Activated T-helper 1 cell treated with anti-CD3 and anti-CD28 coated beads, Interleukin-12 subunit alpha, Interleukin-12 subunit beta, Interleukin-2, Interleukin-4 antibody, amounts not matched to agents 30 ng/mL and 10 ng/mL and 1 ng/mL, durations not matched to agents 14 hours and 24 hours and 36 hours (primary cell): ENCODE measurements at regions of chr12 and their contacts with region 1.

Region 1: DNA sequence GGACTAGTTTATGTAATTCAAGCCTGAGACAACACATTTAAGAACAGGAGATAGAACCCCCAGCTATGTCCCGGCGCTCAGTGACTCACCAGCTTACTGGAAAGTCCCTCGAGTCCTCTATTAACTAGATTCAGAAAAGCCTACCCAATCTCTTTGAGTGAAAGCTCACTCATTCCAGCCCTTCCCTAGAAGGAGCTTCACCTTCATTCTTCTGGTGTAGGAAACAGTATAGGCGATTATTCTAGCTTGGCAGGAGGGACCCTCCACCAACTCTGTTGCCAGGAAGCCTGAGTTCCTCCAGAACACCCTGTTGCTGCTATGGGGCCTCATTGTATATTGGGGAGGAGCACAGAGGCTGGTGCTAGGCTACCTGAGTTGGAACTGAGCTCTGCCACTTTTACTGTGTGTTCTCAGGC is 57.2 kb upstream of the AEBP2 start:
- DNase-seq: peak; percentile 22
- H3K4me3 Mint-ChIP-seq: no peak overlapping the region
- H3K27ac Mint-ChIP-seq: peak overlapping the region; percentile 7
- H3K4me1 Mint-ChIP-seq: peaks cover 9% of the 10 kb centered on the region
- H3K27me3 Mint-ChIP-seq: no peaks in the 10 kb centered on the region

Region 2: GRCh38 chr12:18578191-18578590 is 803.9 kb before region 1 on chr12:
- intact Hi-C with region 1: no loop called
- DNase-seq: no peak
- H3K4me3 Mint-ChIP-seq: no peak overlapping the region
- H3K27ac Mint-ChIP-seq: no peak overlapping the region
- H3K4me1 Mint-ChIP-seq: no peaks in the 10 kb centered on the region
- H3K27me3 Mint-ChIP-seq: no peaks in the 10 kb centered on the region

Region 3: GRCh38 chr12:19482551-19483109 is 100.5 kb after region 1 on chr12:
- intact Hi-C with region 1: no loop called
- DNase-seq: peak; percentile 26
- H3K4me3 Mint-ChIP-seq: peak overlapping the region; percentile 8
- H3K27ac Mint-ChIP-seq: peak overlapping the region; percentile 81
- H3K4me1 Mint-ChIP-seq: peaks cover 55% of the 10 kb centered on the region
- H3K27me3 Mint-ChIP-seq: no peaks in the 10 kb centered on the region

Region 4: DNA sequence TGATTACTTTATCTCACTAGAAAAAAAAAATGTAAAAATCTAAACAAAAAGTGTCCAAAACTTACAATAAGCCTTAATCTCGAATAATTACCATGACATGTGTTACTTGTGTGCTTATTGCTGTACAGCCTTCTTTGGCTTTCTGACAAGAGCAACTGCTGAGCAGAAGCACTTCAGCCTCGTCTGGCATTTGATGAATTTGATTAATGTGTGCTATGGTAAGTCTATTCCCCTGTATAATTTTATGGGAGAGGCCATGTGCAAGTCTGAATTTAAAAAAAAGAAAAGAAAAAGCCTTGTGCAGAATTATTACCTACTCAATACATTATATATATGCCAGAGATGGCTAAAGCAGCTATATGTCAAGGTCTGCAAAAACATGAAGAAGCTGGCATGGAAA is 171.1 kb after region 1 on chr12:
- intact Hi-C with region 1: loop called (anchors 5 kb)
- DNase-seq: no peak
- H3K4me3 Mint-ChIP-seq: no peak overlapping the region
- H3K27ac Mint-ChIP-seq: no peak overlapping the region
- H3K4me1 Mint-ChIP-seq: peaks cover 16% of the 10 kb centered on the region
- H3K27me3 Mint-ChIP-seq: no peaks in the 10 kb centered on the region

Region 5: DNA sequence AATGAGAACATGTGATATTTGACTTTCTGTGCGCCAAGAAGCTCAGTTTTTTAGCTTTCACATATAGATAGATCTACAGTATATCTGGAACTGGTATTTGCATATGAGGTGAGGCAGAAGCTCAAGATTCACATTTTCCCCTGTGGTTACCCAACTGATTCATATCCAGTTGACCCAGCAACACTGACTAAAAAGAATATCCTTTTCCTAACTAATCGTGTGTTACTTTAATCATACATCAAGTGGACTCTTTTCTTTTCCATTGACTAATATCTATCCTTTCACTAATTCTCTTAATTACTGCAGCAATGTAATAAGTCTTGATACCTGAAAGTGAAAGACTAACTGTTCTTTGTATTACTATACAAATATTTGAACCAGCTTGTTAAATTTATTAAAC is 293.2 kb after region 1 on chr12:
- intact Hi-C with region 1: loop called (anchors 5 kb)
- DNase-seq: no peak
- H3K4me3 Mint-ChIP-seq: no peak overlapping the region
- H3K27ac Mint-ChIP-seq: peak overlapping the region; percentile 45
- H3K4me1 Mint-ChIP-seq: peaks cover 41% of the 10 kb centered on the region
- H3K27me3 Mint-ChIP-seq: peaks cover 8% of the 10 kb centered on the region